ENCODE measurements at regions of chr1 and their contacts with region 1.

Region 1: GRCh38 chr1:40032240-40032891 is 8.2 kb upstream of the CAP1 start:
- DNase-seq: peak in 1 of 2 experiments; percentile 55
- H3K4me3 ChIP-seq: no peak overlapping the region
- H3K27ac ChIP-seq: no peak overlapping the region
- H3K4me1 ChIP-seq: peaks cover 17% of the 10 kb centered on the region
- H3K27me3 ChIP-seq: no peaks in the 10 kb centered on the region
- CTCF ChIP-seq: peak; percentile 73

Region 2: DNA sequence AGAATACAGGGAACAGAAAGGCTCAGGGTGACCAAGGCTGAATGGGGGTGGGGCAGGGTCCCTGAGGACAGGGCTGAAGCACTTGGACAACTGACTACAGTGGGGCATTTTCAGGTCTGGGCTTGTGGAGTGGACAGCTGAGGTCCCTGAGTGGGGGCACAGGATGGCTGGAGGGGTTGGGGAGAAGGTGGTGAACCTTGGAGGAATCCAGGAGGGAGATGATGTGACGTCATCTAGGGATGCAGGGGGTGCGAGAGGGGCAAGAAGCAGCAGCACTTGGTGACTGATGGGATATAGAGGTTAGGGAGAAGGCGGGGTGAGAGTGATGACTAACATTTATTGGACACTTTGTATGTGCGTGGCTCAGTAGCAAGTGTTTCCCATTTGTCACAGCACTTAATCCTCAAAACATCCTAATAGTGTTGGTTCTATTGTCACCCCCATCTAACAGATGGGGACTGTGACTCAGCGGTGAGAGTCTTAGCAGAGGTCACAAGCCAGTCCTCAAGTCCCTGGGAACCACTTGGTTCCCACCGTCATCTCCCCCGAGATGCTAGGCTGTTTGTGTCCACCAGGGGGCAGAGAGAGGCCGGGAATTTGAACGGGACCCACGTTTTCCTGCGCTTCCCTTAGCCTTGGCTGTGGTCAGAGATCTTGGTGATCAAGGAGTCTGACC is 215.8 kb before region 1 on chr1:
- CTCF ChIA-PET with region 1: interaction called, 6 read pairs
- POLR2A ChIA-PET with region 1: no interaction called
- intact Hi-C with region 1: loop called (anchors 1 kb)
- DNase-seq: peak; percentile 90 to 97
- H3K4me3 ChIP-seq: no peak overlapping the region
- H3K27ac ChIP-seq: peak overlapping the region; percentile 36; the same call in 1 of the 2 replicates
- H3K4me1 ChIP-seq: peaks cover 21% of the 10 kb centered on the region
- H3K27me3 ChIP-seq: no peaks in the 10 kb centered on the region
- CTCF ChIP-seq: peak; percentile 83

Region 3: DNA sequence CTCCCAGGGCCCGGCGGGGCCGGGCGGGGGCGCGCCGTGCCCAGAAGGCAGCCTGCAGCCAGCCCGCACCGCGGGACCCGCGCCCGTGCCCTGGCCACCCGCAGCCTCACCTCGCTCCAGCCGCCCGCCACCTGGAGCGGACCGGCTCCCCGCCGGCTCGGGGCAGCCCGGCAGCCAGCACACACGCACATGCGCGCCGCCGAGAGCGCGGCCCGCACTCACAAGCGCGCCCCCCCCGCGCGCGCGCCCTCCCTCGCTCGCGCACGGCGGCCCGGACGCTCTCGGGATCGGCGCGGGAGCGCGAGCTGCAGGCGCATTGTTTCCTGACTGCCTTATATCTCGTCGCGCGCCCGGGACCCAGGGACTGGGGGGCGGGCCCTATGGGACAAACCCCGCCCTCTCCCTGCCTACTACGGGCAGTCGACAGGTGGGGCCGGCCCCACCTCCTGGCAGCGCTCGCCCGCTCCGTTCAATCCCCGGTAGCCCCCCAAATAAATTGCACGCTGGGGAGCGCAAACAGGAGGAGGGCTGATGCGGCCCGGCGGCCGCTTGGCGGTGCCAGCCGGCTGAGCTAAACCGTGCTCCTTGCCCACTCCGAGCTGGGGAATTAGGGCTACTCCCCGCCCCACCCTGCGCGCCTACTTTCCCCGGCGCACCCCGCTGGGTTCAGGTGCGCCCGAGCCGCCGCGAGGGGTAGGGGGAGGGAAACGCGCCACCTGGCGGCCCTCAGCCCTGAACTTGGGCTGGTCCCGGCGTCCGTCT is 130.5 kb before region 1 on chr1 and contains the start of gene MYCL:
- CTCF ChIA-PET with region 1: no interaction called
- POLR2A ChIA-PET with region 1: no interaction called
- intact Hi-C with region 1: loop called (anchors 5 kb)
- DNase-seq: peak; percentile 77 to 97
- H3K4me3 ChIP-seq: peak within 1 kb of the TSS; percentile 71
- H3K27ac ChIP-seq: no peak within 1 kb of the TSS
- H3K4me1 ChIP-seq: peaks cover 13% of the 10 kb centered on the region; the same call in 1 of the 2 replicates
- H3K27me3 ChIP-seq: peaks cover 30% of the 10 kb centered on the region
- CTCF ChIP-seq: peak; percentile 85
- total RNA-seq, gene MYCL: 3.8 and 6.2 TPM in 2 replicates

Region 4: DNA sequence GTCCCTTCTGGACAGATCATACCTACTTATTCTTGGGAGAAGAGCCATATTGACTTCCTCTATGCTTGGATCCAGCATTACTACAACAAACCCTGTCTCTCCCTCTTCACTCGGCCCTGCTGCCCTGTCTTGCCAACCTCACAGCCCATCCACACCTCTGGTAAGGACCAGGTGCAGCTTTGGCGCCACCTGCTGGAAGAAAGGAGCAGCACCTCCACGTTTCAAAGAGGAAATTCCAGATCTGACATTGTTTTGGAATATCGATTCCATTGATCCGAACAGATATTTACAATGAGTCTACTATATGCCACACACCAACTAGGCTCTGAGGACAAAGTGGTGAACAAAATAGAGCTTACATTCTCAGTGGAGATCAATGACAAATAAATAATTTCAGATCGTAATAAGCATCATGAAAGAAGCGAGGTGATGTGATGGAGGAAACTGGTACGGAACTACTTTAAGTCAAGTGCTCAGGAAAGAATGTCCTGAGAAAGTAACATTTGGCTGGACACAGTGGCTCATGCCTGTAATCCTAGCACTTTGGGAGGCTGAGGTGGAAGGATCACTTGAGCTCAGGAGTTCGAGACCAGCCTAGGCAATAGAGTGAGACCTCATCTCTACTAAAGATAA is 58.7 kb before region 1 on chr1:
- CTCF ChIA-PET with region 1: interaction called, 7 read pairs
- POLR2A ChIA-PET with region 1: interaction called, 10 read pairs
- intact Hi-C with region 1: loop called (anchors 2 kb)
- DNase-seq: peak; percentile 42 to 69
- H3K4me3 ChIP-seq: no peak overlapping the region
- H3K27ac ChIP-seq: no peak overlapping the region
- H3K4me1 ChIP-seq: no peaks in the 10 kb centered on the region; the same call in 1 of the 2 replicates
- H3K27me3 ChIP-seq: no peaks in the 10 kb centered on the region
- CTCF ChIP-seq: peak; percentile 98

Region 5: DNA sequence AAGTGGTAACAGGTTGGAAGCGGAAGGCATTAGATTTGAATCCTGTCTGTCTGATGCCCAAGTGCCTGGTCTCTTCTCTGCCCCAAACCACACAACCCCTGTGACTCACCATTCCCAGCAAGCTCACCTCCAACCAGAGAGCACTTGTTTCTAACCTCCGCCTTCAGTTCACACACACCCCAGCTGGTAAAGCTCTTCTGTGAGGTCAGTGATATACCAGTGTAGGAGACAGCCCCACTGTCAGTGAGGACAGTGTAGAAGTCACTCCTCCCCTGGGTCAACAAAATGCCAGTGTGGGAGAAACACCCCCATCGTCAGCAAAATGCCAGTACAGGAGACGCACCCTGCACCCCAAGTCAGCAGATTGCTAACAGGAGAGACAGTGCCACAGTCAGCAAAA is 630.5 kb after region 1 on chr1:
- CTCF ChIA-PET with region 1: no interaction called
- POLR2A ChIA-PET with region 1: interaction called, 21 read pairs
- intact Hi-C with region 1: no loop called
- DNase-seq: peak in 1 of 2 experiments; percentile 49
- H3K4me3 ChIP-seq: no peak overlapping the region
- H3K27ac ChIP-seq: no peak overlapping the region
- H3K4me1 ChIP-seq: peaks cover 19% of the 10 kb centered on the region; the same call in 1 of the 2 replicates
- H3K27me3 ChIP-seq: no peaks in the 10 kb centered on the region
- CTCF ChIP-seq: no peak

Measured in PC-9 (cell line).